CD8-positive, alpha-beta T cell (primary cell): ENCODE measurements at regions of chr2 and their contacts with region 1.

Region 1: GRCh38 chr2:10331027-10331701 is 28.5 kb downstream of the HPCAL1 start:
- DNase-seq: peak; percentile 34 to 85 (median 76)
- ATAC-seq: peak; percentile 56
- H3K4me3 ChIP-seq: peak overlapping the region; percentile 56 to 80
- H3K4me3 Mint-ChIP-seq: peak overlapping the region; percentile 92
- H3K27ac ChIP-seq: peak overlapping the region; percentile 57 to 82
- H3K27ac Mint-ChIP-seq: peak overlapping the region; percentile 97
- H3K4me1 ChIP-seq: peaks cover 75% of the 10 kb centered on the region
- H3K4me1 Mint-ChIP-seq: peaks cover 86% of the 10 kb centered on the region
- H3K27me3 ChIP-seq: no peaks in the 10 kb centered on the region
- H3K27me3 Mint-ChIP-seq: no peaks in the 10 kb centered on the region
- CTCF ChIP-seq: no peak

Region 2: GRCh38 chr2:10382354-10383061 is 51.3 kb after region 1 on chr2:
- CTCF ChIA-PET with region 1: interaction called, 5 read pairs
- POLR2A ChIA-PET with region 1: interaction called, 7 read pairs
- intact Hi-C with region 1: loop called (anchors 2 kb)
- DNase-seq: peak; percentile 16 to 89 (median 50)
- ATAC-seq: peak; percentile 92
- H3K4me3 ChIP-seq: peak overlapping the region; percentile 47 to 52
- H3K4me3 Mint-ChIP-seq: peak overlapping the region; percentile 58
- H3K27ac ChIP-seq: peak overlapping the region; percentile 41 to 73
- H3K27ac Mint-ChIP-seq: peak overlapping the region; percentile 91
- H3K4me1 ChIP-seq: peaks cover 97% of the 10 kb centered on the region
- H3K4me1 Mint-ChIP-seq: peaks cover 94% of the 10 kb centered on the region
- H3K27me3 ChIP-seq: no peaks in the 10 kb centered on the region
- H3K27me3 Mint-ChIP-seq: no peaks in the 10 kb centered on the region
- CTCF ChIP-seq: no peak

Region 3: DNA sequence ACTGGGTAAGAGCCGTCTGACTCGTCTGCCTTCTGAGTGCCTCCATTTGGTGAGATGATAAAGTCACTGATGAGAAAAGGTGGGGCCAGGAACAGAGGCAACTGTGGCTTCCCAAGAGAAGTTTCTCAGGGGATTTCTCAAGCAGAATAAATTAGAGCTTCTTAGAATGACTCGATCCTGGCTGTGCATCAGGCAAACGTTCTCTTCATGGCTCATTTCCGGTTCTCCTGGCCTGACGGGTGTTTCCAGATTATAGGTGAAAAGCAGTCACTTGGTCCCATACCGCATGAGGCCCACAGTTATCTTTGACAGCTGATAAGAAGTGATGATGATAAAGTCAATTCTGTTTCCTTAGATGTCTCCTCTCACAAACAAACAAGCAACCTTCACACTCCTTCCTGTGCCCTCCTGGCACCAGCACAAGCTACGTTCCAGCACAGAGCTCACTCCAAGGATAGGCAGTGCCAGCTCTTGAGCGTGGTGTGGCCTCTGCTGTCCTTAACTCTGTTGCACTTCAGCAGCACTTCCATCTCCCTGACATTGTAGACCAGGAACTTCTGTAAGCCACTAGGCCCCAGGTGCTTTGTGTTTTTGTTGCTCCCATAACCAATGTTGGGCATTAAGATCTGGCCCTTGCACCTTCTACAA is 542.8 kb after region 1 on chr2:
- CTCF ChIA-PET with region 1: no interaction called
- POLR2A ChIA-PET with region 1: no interaction called
- intact Hi-C with region 1: no loop called
- DNase-seq: no peak
- ATAC-seq: no peak
- H3K4me3 ChIP-seq: no peak overlapping the region
- H3K4me3 Mint-ChIP-seq: no peak overlapping the region
- H3K27ac ChIP-seq: no peak overlapping the region
- H3K27ac Mint-ChIP-seq: no peak overlapping the region
- H3K4me1 ChIP-seq: no peaks in the 10 kb centered on the region
- H3K4me1 Mint-ChIP-seq: peaks cover 2% of the 10 kb centered on the region
- H3K27me3 ChIP-seq: no peaks in the 10 kb centered on the region
- H3K27me3 Mint-ChIP-seq: peaks cover 15% of the 10 kb centered on the region
- CTCF ChIP-seq: no peak